ENCODE measurements at regions of chr5 and their contacts with region 1.

Region 1: DNA sequence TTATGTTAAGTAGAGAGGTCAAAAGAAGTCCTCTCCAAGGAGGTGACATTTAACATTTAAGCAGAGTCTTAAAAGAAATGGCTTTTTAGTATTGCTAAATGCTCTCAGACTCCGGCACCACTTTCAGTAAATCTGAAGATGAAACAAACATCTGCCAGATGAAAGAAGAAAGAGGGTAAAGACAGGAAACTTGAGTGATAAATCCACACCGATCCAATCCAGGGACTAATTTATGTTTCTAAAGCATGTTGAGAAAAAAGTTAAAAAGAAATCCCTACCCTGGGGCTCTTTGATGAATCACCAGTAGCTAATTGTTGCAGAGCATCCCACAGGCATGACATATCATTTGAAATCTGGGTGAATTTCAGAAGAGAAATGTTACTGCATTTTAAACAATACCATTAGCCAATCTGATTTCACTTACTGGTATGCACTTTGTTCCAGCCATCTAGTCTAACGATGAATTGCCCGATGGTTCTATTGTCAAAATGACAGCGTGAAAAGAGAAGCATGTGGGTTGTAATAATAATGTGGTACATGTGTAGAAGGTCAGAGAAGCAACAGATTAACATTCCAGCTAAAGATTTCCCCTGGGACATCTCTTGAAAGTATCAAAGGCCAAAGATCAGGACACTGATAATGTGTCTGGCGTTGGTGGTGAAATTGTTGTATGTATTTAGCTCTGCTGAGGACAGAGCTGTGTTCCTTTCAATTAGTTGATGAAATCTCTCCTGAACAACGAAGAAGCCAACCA is 485.7 kb downstream of the CSNK1G3 start:
- DNase-seq: no peak
- H3K4me3 Mint-ChIP-seq: no peak overlapping the region
- H3K27ac Mint-ChIP-seq: no peak overlapping the region
- H3K4me1 Mint-ChIP-seq: no peaks in the 10 kb centered on the region
- H3K27me3 Mint-ChIP-seq: no peaks in the 10 kb centered on the region

Region 2: DNA sequence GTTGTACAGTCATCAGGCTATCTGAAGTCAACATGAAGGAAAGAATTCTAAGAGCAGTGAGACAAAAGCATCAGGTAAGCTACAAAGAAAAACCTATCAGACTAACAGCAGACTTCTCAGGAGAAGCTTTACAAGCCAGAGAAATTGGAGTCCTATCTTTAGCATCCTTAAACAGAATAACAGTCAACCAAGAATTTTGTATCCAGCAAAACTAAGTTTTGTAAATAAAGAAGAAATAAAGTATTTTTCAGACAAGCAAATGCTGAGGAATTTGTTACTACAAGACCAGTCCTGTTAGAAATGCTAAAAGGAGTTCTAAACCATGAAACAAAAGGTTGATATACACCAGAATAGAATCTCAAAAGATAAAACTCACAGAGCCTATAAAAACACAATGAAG is 247.6 kb after region 1 on chr5:
- intact Hi-C with region 1: loop called (anchors 5 kb)
- DNase-seq: no peak
- H3K4me3 Mint-ChIP-seq: no peak overlapping the region
- H3K27ac Mint-ChIP-seq: no peak overlapping the region
- H3K4me1 Mint-ChIP-seq: no peaks in the 10 kb centered on the region
- H3K27me3 Mint-ChIP-seq: no peaks in the 10 kb centered on the region

Region 3: DNA sequence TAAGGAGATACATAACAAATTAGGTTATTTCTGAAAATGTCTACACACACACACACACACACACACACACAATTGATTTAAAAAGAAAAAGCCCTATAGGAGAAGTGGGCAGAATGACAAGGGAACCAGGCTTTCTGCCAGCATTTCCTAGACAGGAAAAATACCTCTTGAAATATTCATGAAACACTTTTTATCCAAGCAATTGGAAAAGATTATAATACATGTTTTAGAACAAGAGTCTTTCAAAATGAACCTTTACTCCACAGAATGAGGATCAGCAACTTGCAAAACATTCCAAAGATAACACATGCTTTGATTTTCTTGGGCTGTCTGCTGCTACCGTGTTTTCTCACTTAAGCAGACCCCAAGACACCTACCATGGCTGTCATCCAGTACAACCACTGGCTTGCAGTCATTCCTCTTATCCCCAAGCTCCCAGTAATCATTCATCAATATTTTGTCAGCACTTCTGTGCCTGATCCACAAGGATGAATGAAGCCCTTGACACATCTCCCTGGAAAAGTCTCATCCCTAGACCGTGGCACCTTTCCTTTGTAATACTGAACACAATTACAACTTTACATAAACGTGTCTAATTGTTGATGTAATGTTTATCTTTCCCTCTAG is 1465.9 kb after region 1 on chr5:
- intact Hi-C with region 1: no loop called
- DNase-seq: no peak
- H3K4me3 Mint-ChIP-seq: no peak overlapping the region
- H3K27ac Mint-ChIP-seq: no peak overlapping the region
- H3K4me1 Mint-ChIP-seq: no peaks in the 10 kb centered on the region
- H3K27me3 Mint-ChIP-seq: no peaks in the 10 kb centered on the region

Measured in activated CD4-positive, alpha-beta T cell treated with anti-CD3 and anti-CD28 coated beads, Interleukin-2, amount 10 ng/mL, durations not matched to agents 24 days and 14 days (primary cell).